Endothelial cell of umbilical vein (primary cell): ENCODE measurements at regions of chr10 and their contacts with region 1.

Region 1: GRCh38 chr10:6748978-6749635 is 169.0 kb upstream of the PRKCQ start:
- DNase-seq: peak; percentile 59
- H3K4me3 ChIP-seq: no peak overlapping the region
- H3K27ac ChIP-seq: peak overlapping the region; percentile 42
- H3K4me1 ChIP-seq: peaks cover 16% of the 10 kb centered on the region
- H3K27me3 ChIP-seq: no peaks in the 10 kb centered on the region
- CTCF ChIP-seq: no peak
- POLR2A ChIP-seq: no peak

Region 2: GRCh38 chr10:6729071-6729774 is 19.9 kb before region 1 on chr10:
- CTCF ChIA-PET with region 1: interaction called, 4 read pairs
- POLR2A ChIA-PET with region 1: no interaction called
- dilution Hi-C with region 1: no loop called
- intact Hi-C with region 1: loop called (anchors 1 kb)
- DNase-seq: peak; percentile 31
- H3K4me3 ChIP-seq: no peak overlapping the region
- H3K27ac ChIP-seq: peak overlapping the region; percentile 46
- H3K4me1 ChIP-seq: peaks cover 24% of the 10 kb centered on the region
- H3K27me3 ChIP-seq: no peaks in the 10 kb centered on the region
- CTCF ChIP-seq: no peak
- POLR2A ChIP-seq: peak; percentile 2

Region 3: GRCh38 chr10:6737758-6738505 is 11.2 kb before region 1 on chr10:
- CTCF ChIA-PET with region 1: interaction called, 14 read pairs
- POLR2A ChIA-PET with region 1: no interaction called
- dilution Hi-C with region 1: no loop called
- intact Hi-C with region 1: loop called (anchors 1 kb)
- DNase-seq: peak; percentile 69
- H3K4me3 ChIP-seq: no peak overlapping the region
- H3K27ac ChIP-seq: no peak overlapping the region
- H3K4me1 ChIP-seq: peaks cover 17% of the 10 kb centered on the region
- H3K27me3 ChIP-seq: peaks cover 0 to 8% of the 10 kb centered on the region in 2 experiments
- CTCF ChIP-seq: no peak
- POLR2A ChIP-seq: no peak